HCT116 (cell line): ENCODE measurements at regions of chr1 and their contacts with region 1.

Region 1: DNA sequence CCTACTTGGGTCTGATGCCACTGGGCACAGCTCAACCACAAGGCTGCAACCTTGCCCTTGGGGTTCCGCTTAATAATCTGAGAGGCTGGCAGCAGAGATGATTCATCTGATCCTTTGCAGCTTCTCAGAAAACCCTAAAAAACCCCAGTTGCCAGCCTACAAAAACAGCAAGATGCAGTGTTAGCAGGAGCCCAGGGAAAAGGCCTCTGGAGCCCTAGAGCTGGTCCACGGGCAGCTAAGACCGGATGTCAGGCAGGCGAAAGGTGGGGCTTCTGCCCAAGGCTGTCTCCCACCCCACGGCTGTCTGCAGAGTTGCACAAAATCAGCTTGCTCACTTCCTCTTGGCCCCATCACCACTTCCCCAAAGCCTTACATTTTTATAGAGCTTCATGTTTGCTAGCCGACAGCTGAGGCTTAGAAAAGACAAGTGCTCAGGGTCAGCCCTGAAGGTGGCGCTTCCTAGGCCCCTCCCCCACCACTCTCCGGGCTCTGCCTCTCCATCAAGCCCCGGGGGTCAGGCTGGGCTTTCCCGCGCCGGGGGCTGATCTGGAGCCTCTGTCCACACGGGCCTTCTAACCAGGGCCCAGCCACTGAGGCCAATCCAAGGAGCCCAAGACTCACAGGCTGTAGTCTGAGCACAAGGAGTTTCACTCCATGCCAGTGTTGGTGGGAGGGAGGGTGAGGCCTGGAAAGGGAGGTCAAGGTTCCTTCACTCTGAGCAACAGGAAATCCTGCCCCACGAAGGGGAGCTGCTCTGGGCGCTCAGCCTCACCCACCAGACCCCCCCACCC is 4.2 kb upstream of the ADORA3 start:
- DNase-seq: no peak
- ATAC-seq: peak; percentile 80
- H3K4me3 ChIP-seq: peak overlapping the region; percentile 2 to 49; a peak in 3 of 4 replicates
- H3K27ac ChIP-seq: peak overlapping the region; percentile 63
- H3K4me1 ChIP-seq: peaks cover 9 to 16% of the 10 kb centered on the region in 2 experiments
- H3K27me3 ChIP-seq: no peaks in the 10 kb centered on the region
- CTCF ChIP-seq: no peak; a peak in 1 of 6 replicates
- POLR2A ChIP-seq: no peak
- RAD21 ChIP-seq: no peak

Region 2: GRCh38 chr1:111497592-111497991 is 10.0 kb before region 1 on chr1:
- CTCF ChIA-PET with region 1: interaction called, 26 read pairs
- POLR2A ChIA-PET with region 1: interaction called, 11 read pairs
- RAD21 ChIA-PET with region 1: no interaction called
- intact Hi-C with region 1: no loop called
- DNase-seq: no peak
- ATAC-seq: no peak
- H3K4me3 ChIP-seq: no peak overlapping the region
- H3K27ac ChIP-seq: no peak overlapping the region
- H3K4me1 ChIP-seq: no peaks in the 10 kb centered on the region
- H3K27me3 ChIP-seq: no peaks in the 10 kb centered on the region
- CTCF ChIP-seq: no peak
- POLR2A ChIP-seq: no peak
- RAD21 ChIP-seq: no peak

Region 3: GRCh38 chr1:111747282-111747734 is 239.7 kb after region 1 on chr1:
- CTCF ChIA-PET with region 1: interaction called, 18 read pairs
- POLR2A ChIA-PET with region 1: interaction called, 8 read pairs
- RAD21 ChIA-PET with region 1: interaction called, 3 to 11 read pairs
- intact Hi-C with region 1: no loop called
- DNase-seq: peak; percentile 90
- ATAC-seq: peak; percentile 96
- H3K4me3 ChIP-seq: no peak overlapping the region
- H3K27ac ChIP-seq: no peak overlapping the region
- H3K4me1 ChIP-seq: peaks cover 0 to 8% of the 10 kb centered on the region in 2 experiments; a peak in 2 of 4 replicates
- H3K27me3 ChIP-seq: peaks cover 4% of the 10 kb centered on the region; the same call in 1 of the 2 replicates
- CTCF ChIP-seq: peak; percentile 78 to 99 (median 81)
- POLR2A ChIP-seq: no peak
- RAD21 ChIP-seq: peak; percentile 86